Activated CD8-positive, alpha-beta T cell treated with anti-CD3 and anti-CD28 coated beads, Interleukin-2, amount 10 ng/mL, durations not matched to agents 7 days and 5 days (primary cell): ENCODE measurements at regions of chr16 and their contacts with region 1.

Region 1: GRCh38 chr16:9270424-9270823 is 179.0 kb downstream of the HAPSTR1 start:
- DNase-seq: no peak
- ATAC-seq: no peak
- H3K4me3 Mint-ChIP-seq: no peak overlapping the region
- H3K27ac Mint-ChIP-seq: no peak overlapping the region
- H3K4me1 Mint-ChIP-seq: no peaks in the 10 kb centered on the region
- H3K27me3 Mint-ChIP-seq: no peaks in the 10 kb centered on the region

Region 2: DNA sequence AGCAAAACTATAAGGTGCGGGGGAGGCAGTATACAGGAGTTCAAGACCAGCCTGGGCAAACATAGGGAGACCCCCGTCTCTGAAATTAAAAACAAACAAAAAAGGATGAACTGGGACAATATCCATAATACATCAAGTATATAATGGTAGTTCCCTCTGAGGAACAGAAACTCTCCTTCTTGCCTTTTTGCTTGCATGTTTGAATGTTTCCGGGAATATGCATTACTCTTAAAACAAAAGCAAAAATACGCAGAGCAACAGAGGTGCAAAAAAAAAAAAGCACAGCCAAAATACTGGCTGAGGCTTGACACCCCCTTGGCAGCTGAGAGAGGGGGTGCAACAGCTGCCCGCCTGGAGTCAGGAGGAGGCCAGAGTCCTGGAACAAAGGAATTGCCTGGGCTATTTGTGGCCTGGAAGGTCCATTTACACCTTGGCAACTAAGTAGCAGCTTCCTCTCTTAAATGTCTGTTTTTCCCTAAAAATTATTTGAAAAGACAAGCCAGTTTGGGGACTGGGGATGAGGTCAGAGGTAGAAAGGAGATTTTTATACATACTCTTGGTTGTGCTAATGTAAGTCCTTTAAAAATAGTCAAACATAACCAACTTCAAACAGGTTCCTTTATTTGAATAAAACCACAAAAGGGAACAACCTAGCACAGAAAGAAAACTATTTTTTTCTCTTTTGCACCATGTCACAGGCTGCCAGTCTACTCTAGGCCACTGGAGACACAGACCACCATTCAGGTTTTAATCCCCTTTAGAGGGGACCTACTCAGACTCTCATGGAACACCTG is 326.3 kb before region 1 on chr16:
- CTCF ChIA-PET with region 1: no interaction called
- POLR2A ChIA-PET with region 1: no interaction called
- DNase-seq: no peak
- ATAC-seq: peak; percentile 57
- H3K4me3 Mint-ChIP-seq: peak overlapping the region; percentile 49
- H3K27ac Mint-ChIP-seq: peak overlapping the region; percentile 63
- H3K4me1 Mint-ChIP-seq: peaks cover 74% of the 10 kb centered on the region
- H3K27me3 Mint-ChIP-seq: no peaks in the 10 kb centered on the region

Region 3: GRCh38 chr16:9258423-9259051 is 11.9 kb before region 1 on chr16:
- CTCF ChIA-PET with region 1: interaction called, 10 read pairs
- POLR2A ChIA-PET with region 1: no interaction called
- DNase-seq: peak; percentile 55
- ATAC-seq: peak; percentile 63
- H3K4me3 Mint-ChIP-seq: no peak overlapping the region
- H3K27ac Mint-ChIP-seq: no peak overlapping the region
- H3K4me1 Mint-ChIP-seq: peaks cover 3% of the 10 kb centered on the region
- H3K27me3 Mint-ChIP-seq: peaks cover 4% of the 10 kb centered on the region